Heart left ventricle (tissue), 16 donors: ENCODE measurements at regions of chr3 and their contacts with region 1.

Region 1: DNA sequence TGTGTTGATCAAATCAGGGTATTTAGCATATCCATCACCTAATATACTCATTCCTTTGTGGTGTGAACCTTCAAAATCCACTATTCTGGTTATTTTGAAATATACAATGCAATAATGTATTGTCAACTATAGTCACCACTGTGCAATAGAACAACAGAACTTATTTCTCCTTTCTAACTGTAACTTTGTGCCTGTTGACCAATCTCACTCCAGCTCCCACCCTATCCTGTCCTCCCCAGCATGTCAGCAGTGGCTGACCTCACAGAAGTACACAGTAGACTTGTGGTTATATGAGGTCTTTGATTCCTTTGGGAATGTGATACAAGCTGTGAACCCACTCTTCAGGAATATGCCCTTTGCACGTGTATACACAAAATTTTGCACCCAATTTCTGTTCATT is 64.2 kb downstream of the ECT2 start:
- DNase-seq: no peak
- ATAC-seq: no peak
- H3K4me3 ChIP-seq: no peak overlapping the region
- H3K27ac ChIP-seq: peak overlapping the region in 5 of 12 donors; percentile 55 to 73 (median 69)
- H3K4me1 ChIP-seq: peaks cover 0 to 13% (median 0%) of the 10 kb centered on the region in 12 donors
- H3K27me3 ChIP-seq: no peaks in the 10 kb centered on the region
- CTCF ChIP-seq: no peak
- POLR2A ChIP-seq: no peak

Region 2: DNA sequence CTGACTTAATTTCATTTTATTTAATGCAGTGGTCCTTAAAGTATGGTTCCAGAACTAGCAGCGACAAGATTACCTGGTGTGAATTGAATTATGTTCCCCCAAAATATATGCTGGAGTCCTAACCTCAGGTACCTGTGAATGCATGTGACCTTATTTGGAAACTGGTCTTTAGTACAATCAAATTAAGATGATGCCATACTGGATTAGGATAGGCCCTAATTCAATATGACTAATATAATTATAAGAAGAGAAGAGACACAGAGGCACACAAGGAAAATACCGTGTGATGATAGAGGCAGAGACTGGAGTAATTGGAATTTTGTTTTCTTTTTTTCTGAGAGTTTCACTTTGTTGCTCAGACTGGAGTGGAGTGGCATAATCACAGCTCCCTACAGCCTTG is 338.9 kb after region 1 on chr3:
- intact Hi-C with region 1: no loop called
- DNase-seq: no peak
- ATAC-seq: no peak
- H3K4me3 ChIP-seq: no peak overlapping the region
- H3K27ac ChIP-seq: no peak overlapping the region
- H3K4me1 ChIP-seq: no peaks in the 10 kb centered on the region
- H3K27me3 ChIP-seq: no peaks in the 10 kb centered on the region
- CTCF ChIP-seq: no peak
- POLR2A ChIP-seq: no peak

Region 3: DNA sequence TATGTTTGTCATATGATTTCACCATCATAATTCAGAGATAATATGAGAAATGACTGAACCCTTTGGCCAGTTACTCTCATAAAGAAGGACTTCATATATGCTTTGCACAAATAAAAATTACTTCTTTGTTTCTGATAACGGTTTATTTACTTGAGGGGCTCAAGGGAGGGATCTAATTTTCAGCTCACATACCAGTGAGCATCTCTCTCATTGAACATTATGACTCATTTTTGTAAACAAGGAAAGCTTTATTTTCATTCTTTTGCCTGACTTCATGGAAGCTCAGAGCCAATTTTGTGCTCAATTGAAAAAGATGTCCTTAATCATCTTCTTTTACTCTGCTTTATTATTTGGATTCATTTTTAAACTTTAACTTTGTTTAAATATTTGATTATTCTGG is 588.6 kb after region 1 on chr3:
- intact Hi-C with region 1: loop called in 6 of 10 experiments (anchors 5 to 10 kb)
- DNase-seq: no peak
- ATAC-seq: no peak
- H3K4me3 ChIP-seq: no peak overlapping the region
- H3K27ac ChIP-seq: no peak overlapping the region
- H3K4me1 ChIP-seq: peaks cover 0 to 12% (median 1%) of the 10 kb centered on the region in 12 donors
- H3K27me3 ChIP-seq: peaks cover 0 to 9% (median 0%) of the 10 kb centered on the region in 9 donors
- CTCF ChIP-seq: no peak
- POLR2A ChIP-seq: no peak